ENCODE measurements at regions of chr6 and their contacts with region 1.

Region 1: DNA sequence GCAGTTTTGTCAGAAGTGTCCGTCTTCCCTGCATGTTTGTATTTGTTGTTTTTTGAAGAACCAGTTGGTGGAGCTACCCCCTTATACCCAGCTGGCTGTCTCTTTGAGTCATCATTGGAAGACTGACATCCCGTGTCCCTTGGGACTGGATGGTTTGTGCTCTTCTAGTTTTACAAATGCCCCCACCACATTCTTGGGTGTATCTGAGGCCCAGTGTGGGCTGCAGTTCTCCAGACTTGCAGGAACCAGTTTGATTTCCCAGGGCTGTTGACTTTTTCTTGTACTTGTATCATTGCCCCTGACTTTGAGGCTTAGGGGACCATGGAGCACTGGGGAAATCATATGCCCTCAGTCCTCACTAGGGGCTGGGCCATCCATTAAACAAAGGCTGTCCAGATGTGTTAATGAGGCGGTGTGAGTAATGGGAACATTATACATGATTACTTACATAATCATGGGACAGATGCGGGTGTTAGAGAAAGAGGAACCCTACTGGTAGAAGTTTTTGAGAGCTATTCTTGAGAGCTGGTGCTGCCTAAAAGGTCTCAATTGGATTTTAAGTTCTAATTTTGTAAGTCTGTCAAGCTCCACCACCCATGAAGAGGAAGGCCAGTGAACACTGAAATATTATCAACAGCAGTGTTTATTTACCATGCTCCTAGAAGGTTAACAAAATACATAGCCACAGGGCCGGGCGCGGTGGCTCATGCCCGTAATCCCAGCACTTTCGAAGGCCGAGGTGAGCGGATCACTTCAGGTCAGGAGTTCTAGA is 8.4 kb downstream of the JARID2 start:
- DNase-seq: no peak
- H3K4me3 Mint-ChIP-seq: peak overlapping the region; percentile 96
- H3K27ac Mint-ChIP-seq: peak overlapping the region; percentile 98
- H3K4me1 Mint-ChIP-seq: peaks cover 93% of the 10 kb centered on the region
- H3K27me3 Mint-ChIP-seq: no peaks in the 10 kb centered on the region

Region 2: DNA sequence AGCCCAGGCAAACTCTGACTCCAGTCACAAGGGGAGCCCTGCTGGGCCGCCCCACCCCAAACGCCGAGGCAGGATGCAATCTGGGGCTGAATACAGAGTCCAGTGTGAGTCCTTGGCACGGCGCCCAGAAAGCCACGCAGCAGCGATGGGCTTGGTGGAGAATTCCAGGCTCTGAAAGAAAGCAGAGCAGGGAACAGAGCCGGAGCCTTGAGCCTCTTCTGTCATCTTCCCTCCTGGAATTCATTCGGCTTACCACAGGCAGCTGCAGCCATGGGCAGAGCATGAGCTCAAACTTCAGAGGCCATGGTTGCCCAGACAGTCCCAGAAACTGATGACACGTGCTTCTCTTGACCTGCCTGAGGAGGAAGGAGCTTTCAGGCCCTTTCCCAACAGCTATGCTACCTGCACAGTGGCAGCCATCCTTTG is 449.5 kb before region 1 on chr6:
- CTCF ChIA-PET with region 1: no interaction called
- POLR2A ChIA-PET with region 1: no interaction called
- intact Hi-C with region 1: no loop called
- DNase-seq: no peak
- H3K4me3 Mint-ChIP-seq: no peak overlapping the region
- H3K27ac Mint-ChIP-seq: no peak overlapping the region
- H3K4me1 Mint-ChIP-seq: no peaks in the 10 kb centered on the region
- H3K27me3 Mint-ChIP-seq: no peaks in the 10 kb centered on the region

Region 3: DNA sequence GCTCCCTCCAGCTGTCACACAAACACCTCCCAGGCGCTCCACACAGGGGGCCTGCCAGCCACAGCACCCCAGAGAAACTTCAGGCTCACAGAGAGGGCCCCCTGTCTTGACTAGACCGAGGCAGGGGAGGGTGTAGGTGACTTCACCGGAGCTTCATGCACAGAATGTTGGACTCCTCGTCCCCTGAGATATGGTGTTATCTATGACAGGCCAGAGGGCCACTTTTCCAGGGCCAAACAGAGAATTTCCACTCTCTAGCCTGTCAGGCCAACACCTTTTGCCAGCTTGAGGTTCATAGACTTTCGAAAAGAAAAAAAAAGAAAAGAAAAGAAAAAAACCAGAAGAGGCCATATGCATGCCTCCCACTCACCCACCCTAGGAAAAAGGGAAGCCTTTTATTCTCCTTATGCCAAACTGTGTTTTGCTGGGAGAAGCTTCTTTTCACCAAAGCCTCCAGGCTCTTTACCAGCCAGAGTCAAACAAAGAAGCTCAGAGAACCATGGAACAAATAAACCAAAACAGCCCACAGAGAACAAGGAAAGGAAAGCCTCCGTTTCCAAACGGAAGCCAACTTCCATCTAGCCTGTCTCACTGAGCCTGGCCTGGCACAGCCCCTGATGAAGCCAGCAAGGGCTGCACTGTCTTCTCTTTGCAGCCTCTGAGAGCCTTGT is 321.6 kb before region 1 on chr6:
- CTCF ChIA-PET with region 1: no interaction called
- POLR2A ChIA-PET with region 1: no interaction called
- intact Hi-C with region 1: no loop called
- DNase-seq: no peak
- H3K4me3 Mint-ChIP-seq: no peak overlapping the region
- H3K27ac Mint-ChIP-seq: no peak overlapping the region
- H3K4me1 Mint-ChIP-seq: peaks cover 4% of the 10 kb centered on the region
- H3K27me3 Mint-ChIP-seq: no peaks in the 10 kb centered on the region

Region 4: GRCh38 chr6:15491255-15491985 is 237.2 kb after region 1 on chr6:
- CTCF ChIA-PET with region 1: no interaction called
- POLR2A ChIA-PET with region 1: no interaction called
- intact Hi-C with region 1: loop called (anchors 2 kb)
- DNase-seq: peak; percentile 84
- H3K4me3 Mint-ChIP-seq: no peak overlapping the region
- H3K27ac Mint-ChIP-seq: peak overlapping the region; percentile 76
- H3K4me1 Mint-ChIP-seq: peaks cover 35% of the 10 kb centered on the region
- H3K27me3 Mint-ChIP-seq: no peaks in the 10 kb centered on the region

Measured in activated CD4-positive, alpha-beta memory T cell treated with anti-CD3 and anti-CD28 coated beads for 36 hours (primary cell).